ENCODE measurements at regions of chr6 and their contacts with region 1.

Region 1: GRCh38 chr6:17803409-17803808 is 96.7 kb upstream of the NUP153 start:
- DNase-seq: no peak
- H3K4me3 Mint-ChIP-seq: no peak overlapping the region
- H3K27ac Mint-ChIP-seq: no peak overlapping the region
- H3K4me1 Mint-ChIP-seq: no peaks in the 10 kb centered on the region
- H3K27me3 Mint-ChIP-seq: peaks cover 8% of the 10 kb centered on the region

Region 2: GRCh38 chr6:17156112-17156921 is 647.1 kb before region 1 on chr6:
- CTCF ChIA-PET with region 1: interaction called, 12 read pairs
- POLR2A ChIA-PET with region 1: no interaction called
- intact Hi-C with region 1: no loop called
- DNase-seq: peak; percentile 53
- H3K4me3 Mint-ChIP-seq: no peak overlapping the region
- H3K27ac Mint-ChIP-seq: no peak overlapping the region
- H3K4me1 Mint-ChIP-seq: no peaks in the 10 kb centered on the region
- H3K27me3 Mint-ChIP-seq: peaks cover 8% of the 10 kb centered on the region

Region 3: DNA sequence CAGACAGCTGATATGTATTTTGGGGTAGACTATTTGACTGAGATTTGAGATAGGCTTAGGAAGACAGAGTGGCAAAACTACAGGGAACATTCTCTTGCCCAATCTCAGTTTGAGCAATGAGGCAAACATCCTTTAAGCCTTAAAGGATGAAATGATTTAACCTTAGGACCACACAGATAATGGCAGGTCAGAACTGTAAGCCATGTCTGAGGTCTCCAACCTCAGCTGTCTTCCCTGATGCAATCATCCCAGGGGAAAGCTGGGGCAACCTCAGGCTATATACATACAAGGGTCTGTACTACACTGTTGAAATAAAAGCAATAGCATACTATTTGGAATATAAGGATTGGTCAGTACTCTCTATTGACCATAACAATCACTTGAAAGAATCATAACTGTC is 12.9 kb before region 1 on chr6:
- CTCF ChIA-PET with region 1: interaction called, 12 read pairs
- POLR2A ChIA-PET with region 1: no interaction called
- intact Hi-C with region 1: no loop called
- DNase-seq: no peak
- H3K4me3 Mint-ChIP-seq: no peak overlapping the region
- H3K27ac Mint-ChIP-seq: no peak overlapping the region
- H3K4me1 Mint-ChIP-seq: no peaks in the 10 kb centered on the region
- H3K27me3 Mint-ChIP-seq: no peaks in the 10 kb centered on the region

Region 4: GRCh38 chr6:18323935-18324705 is 520.7 kb after region 1 on chr6:
- CTCF ChIA-PET with region 1: no interaction called
- POLR2A ChIA-PET with region 1: no interaction called
- intact Hi-C with region 1: no loop called
- DNase-seq: no peak
- H3K4me3 Mint-ChIP-seq: no peak overlapping the region
- H3K27ac Mint-ChIP-seq: no peak overlapping the region
- H3K4me1 Mint-ChIP-seq: peaks cover 8% of the 10 kb centered on the region
- H3K27me3 Mint-ChIP-seq: peaks cover 4% of the 10 kb centered on the region